Left cardiac atrium (tissue), 4 donors: ENCODE measurements at regions of chr18 and their contacts with region 1.

Region 1: DNA sequence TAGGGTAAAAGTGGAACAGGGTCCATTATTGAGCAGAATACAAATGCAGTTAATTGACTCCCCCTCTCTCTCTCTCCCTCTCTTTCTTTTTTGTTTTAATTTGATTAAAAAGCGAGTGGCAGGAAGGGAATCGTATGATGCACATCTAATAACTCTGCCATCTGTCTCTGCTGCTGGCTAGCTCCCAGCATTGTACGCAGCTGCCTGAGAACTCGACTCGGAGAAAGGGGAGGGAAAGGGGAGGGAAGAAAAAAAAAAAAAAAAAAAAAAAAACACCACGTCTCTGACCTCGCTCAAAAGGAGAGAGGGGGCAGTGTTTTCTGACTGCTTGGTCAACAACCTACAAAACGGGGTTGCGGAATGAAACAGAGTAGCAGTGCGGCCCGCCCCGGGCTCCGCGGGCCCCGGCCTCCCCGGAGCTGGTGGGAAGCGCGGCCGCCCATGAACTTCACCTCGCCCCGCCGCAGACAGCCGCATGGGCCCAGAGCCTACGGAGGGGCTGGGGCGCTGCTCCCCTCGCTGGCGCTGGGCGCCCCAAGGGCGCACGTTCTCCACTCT is 265.7 kb downstream of the TCF4 start:
- DNase-seq: peak; percentile 88
- ATAC-seq: peak; percentile 87 to 94

Region 2: GRCh38 chr18:55243857-55244256 is 78.4 kb before region 1 on chr18:
- intact Hi-C with region 1: loop called in 1 of 2 experiments (anchors 5 kb)
- DNase-seq: peak; percentile 53
- ATAC-seq: peak; percentile 82 to 90

Region 3: DNA sequence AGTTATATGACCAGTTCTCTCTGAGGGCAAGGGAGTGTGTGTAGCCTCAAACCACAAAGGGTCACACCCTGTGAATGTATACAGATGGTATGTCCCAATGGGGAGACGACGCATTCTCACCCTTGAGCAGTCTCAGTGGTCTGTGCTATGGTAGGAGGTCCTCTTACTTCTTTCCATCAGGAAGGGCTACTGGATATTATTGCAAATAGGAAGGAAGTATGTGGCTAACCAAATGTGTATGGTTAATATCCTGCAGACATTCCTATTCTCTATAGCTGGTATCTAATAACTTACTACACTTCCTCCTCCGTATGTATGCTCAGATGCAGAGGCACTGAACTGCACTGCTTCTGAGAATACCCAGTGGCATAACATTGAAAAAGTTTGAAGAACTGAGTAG is 56.3 kb before region 1 on chr18:
- intact Hi-C with region 1: loop called in 1 of 2 experiments (anchors 10 kb)
- DNase-seq: no peak
- ATAC-seq: no peak

Region 4: GRCh38 chr18:55781481-55781957 is 459.3 kb after region 1 on chr18:
- intact Hi-C with region 1: loop called in 1 of 2 experiments (anchors 10 kb)
- DNase-seq: peak; percentile 52
- ATAC-seq: peak; percentile 39 to 54